PC-9 (cell line): ENCODE measurements at regions of chr11 and their contacts with region 1.

Region 1: GRCh38 chr11:32090545-32091373 is at the start of gene RCN1:
- DNase-seq: peak; percentile 48 to 82
- H3K4me3 ChIP-seq: peak within 1 kb of the TSS; percentile 70
- H3K27ac ChIP-seq: peak within 1 kb of the TSS; percentile 89
- H3K4me1 ChIP-seq: peaks cover 58% of the 10 kb centered on the region
- H3K27me3 ChIP-seq: no peaks in the 10 kb centered on the region
- CTCF ChIP-seq: no peak
- total RNA-seq, gene RCN1: 206 and 211 TPM in 2 replicates

Region 2: DNA sequence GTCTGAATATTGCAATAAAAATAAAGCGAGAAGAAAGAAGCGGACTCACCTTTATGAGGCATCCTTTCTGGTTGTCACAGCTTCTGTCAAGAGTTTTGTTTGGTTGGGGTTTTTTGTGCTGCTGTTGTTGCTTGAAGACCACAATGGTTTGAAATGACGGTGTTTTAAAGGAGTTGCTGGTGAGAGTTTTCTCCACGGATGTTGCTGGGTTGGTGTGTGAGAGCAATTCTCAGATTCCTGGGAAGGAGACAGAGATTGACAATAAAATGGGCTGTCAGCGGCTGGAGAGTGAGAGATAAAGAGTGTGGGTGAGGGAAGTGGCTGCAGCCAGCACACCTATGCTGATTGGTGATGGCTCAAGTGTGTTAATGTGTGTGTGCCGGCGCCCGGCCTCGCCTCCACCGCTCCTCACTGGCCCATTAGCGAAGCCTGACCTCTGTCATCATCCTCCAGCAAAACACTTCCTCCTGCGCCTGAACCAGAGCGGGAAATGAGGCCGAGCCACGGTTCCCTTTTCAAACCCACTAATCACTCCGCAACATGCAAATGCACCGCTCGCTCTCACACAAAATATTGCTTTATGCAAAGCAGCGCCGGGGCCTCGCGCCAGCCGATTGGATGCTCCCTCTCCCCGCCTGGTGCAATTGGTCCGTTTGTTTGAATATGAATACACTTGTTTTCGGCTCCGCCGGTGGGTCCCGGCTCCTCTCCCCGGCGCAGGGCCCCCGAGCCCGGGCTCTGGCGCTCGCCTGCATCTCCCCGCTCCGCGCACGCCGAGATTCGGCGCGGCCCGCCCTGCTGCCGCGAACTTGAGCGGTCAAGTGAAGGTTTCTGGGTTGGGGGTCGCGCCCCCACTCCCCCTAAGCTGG is 279.7 kb before region 1 on chr11 and contains the start of gene PAX6:
- CTCF ChIA-PET with region 1: no interaction called
- POLR2A ChIA-PET with region 1: no interaction called
- intact Hi-C with region 1: loop called (anchors 5 kb)
- DNase-seq: peak; percentile 95 to 98
- H3K4me3 ChIP-seq: peak within 1 kb of the TSS; percentile 89
- H3K27ac ChIP-seq: peak within 1 kb of the TSS; percentile 77
- H3K4me1 ChIP-seq: peaks cover 28% of the 10 kb centered on the region
- H3K27me3 ChIP-seq: no peaks in the 10 kb centered on the region
- CTCF ChIP-seq: 0 out of 2 replicates have a peak, but pooled peaks have one; percentile 16
- total RNA-seq, gene PAX6: 19.8 and 29.0 TPM in 2 replicates

Region 3: GRCh38 chr11:32052218-32052617 is 38.5 kb before region 1 on chr11:
- CTCF ChIA-PET with region 1: interaction called, 3 read pairs
- POLR2A ChIA-PET with region 1: interaction called, 10 read pairs
- intact Hi-C with region 1: loop called (anchors 5 kb)
- DNase-seq: peak in 1 of 2 experiments; percentile 54
- H3K4me3 ChIP-seq: no peak overlapping the region
- H3K27ac ChIP-seq: no peak overlapping the region
- H3K4me1 ChIP-seq: no peaks in the 10 kb centered on the region
- H3K27me3 ChIP-seq: peaks cover 3% of the 10 kb centered on the region; the same call in 1 of the 2 replicates
- CTCF ChIP-seq: peak; percentile 91

Region 4: GRCh38 chr11:32071811-32072210 is 18.9 kb before region 1 on chr11:
- CTCF ChIA-PET with region 1: no interaction called
- POLR2A ChIA-PET with region 1: interaction called, 3 read pairs
- intact Hi-C with region 1: loop called (anchors 2 kb)
- DNase-seq: peak; percentile 65 to 81
- H3K4me3 ChIP-seq: no peak overlapping the region
- H3K27ac ChIP-seq: no peak overlapping the region
- H3K4me1 ChIP-seq: peaks cover 28% of the 10 kb centered on the region
- H3K27me3 ChIP-seq: 0 out of 2 replicates have a peak, but pooled peaks cover 8% of the 10 kb centered on the region
- CTCF ChIP-seq: peak; percentile 70; the same call in 1 of the 2 replicates

Region 5: DNA sequence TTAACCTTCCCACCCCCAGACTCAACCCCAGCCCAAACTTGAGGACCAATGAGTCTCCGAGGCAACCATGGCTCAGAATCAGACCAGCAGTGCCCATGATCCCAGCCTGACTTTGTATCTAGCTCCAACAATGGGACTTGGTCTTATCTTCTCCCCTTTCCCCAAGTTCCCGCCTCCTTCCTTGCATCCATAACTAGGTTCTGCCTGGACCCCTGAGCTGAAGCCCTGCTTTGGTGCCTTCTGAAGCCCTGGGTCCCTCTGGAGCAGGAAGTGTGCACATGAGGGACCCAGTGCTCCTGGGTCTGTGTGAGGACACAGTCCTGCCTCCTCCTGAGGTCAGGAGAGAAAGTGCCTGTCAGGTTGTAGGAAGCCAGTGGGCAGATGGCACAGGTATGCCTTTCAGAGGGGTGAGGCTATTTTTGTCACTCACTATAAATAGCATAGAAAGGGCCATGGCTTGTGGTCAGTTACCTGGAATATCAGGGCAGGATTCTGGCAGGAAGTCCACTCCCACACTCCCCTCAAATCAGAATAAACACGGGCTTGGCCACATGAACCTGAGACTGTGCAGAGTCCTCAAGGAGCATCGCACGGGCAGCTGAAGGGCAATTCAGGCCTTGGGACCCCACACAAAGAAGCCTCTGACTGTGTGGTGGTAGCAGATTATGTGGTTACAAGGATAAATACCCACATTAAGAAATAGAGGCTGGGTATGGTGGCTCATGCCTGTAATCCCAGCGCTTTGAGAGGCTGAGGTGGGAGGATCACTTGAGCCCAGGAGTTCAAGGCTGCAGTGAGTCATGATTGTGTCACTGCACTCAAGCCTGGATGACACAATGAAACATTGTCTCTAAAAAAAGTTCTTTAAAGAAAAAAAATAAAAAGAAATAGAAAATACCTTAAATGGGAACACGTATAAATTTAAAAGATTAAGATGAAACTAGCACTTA is 27.5 kb after region 1 on chr11:
- CTCF ChIA-PET with region 1: interaction called, 4 read pairs
- POLR2A ChIA-PET with region 1: no interaction called
- intact Hi-C with region 1: loop called (anchors 2 kb)
- DNase-seq: peak; percentile 52 to 80
- H3K4me3 ChIP-seq: no peak overlapping the region
- H3K27ac ChIP-seq: peak overlapping the region; percentile 72
- H3K4me1 ChIP-seq: peaks cover 21% of the 10 kb centered on the region
- H3K27me3 ChIP-seq: no peaks in the 10 kb centered on the region
- CTCF ChIP-seq: no peak

Region 6: GRCh38 chr11:32137263-32137662 is 46.5 kb after region 1 on chr11:
- CTCF ChIA-PET with region 1: no interaction called
- POLR2A ChIA-PET with region 1: no interaction called
- intact Hi-C with region 1: loop called (anchors 2 kb)
- DNase-seq: peak in 1 of 2 experiments; percentile 92
- H3K4me3 ChIP-seq: no peak overlapping the region
- H3K27ac ChIP-seq: peak overlapping the region; percentile 67
- H3K4me1 ChIP-seq: peaks cover 19% of the 10 kb centered on the region
- H3K27me3 ChIP-seq: no peaks in the 10 kb centered on the region
- CTCF ChIP-seq: no peak

Region 7: DNA sequence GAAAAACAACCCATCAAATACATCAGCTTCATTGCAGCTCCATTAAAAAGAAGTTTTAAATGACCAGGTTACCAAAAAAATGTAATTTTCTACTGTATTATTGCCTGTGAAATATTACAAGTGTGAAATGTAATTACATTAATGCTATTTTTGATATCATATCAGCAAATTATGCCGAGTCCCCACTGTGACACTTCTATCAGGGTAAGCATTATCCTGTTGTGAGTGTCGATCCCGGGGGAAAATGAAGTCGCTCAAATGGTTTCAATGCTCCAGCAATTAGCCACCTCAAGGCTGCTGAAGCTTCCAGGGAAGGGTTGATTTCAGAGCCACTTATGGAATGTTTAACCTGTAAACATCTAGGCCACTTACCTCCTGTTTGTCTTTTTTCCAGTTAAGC is 70.5 kb after region 1 on chr11:
- CTCF ChIA-PET with region 1: no interaction called
- POLR2A ChIA-PET with region 1: interaction called, 13 read pairs
- intact Hi-C with region 1: no loop called
- DNase-seq: no peak
- H3K4me3 ChIP-seq: no peak overlapping the region
- H3K27ac ChIP-seq: no peak overlapping the region
- H3K4me1 ChIP-seq: no peaks in the 10 kb centered on the region
- H3K27me3 ChIP-seq: no peaks in the 10 kb centered on the region
- CTCF ChIP-seq: no peak